Prostate gland (tissue), 2 donors: ENCODE measurements at regions of chr18 and their contacts with region 1.

Region 1: GRCh38 chr18:1578505-1578904 is 673.8 kb downstream of the ADCYAP1 start:
- DNase-seq: no peak
- H3K4me3 ChIP-seq: no peak overlapping the region
- H3K27ac ChIP-seq: no peak overlapping the region
- H3K4me1 ChIP-seq: no peaks in the 10 kb centered on the region
- H3K27me3 ChIP-seq: no peaks in the 10 kb centered on the region
- CTCF ChIP-seq: no peak
- POLR2A ChIP-seq: no peak

Region 2: GRCh38 chr18:2529154-2529553 is 950.6 kb after region 1 on chr18:
- intact Hi-C with region 1: loop called (anchors 10 kb)
- DNase-seq: no peak
- H3K4me3 ChIP-seq: no peak overlapping the region
- H3K27ac ChIP-seq: no peak overlapping the region
- H3K4me1 ChIP-seq: no peaks in the 10 kb centered on the region
- H3K27me3 ChIP-seq: no peaks in the 10 kb centered on the region
- CTCF ChIP-seq: no peak
- POLR2A ChIP-seq: no peak